Activated naive CD4-positive, alpha-beta T cell treated with anti-CD3 and anti-CD28 coated beads, Interleukin-2, amount 10 ng/mL, durations not matched to agents 7 days and 5 days (primary cell): ENCODE measurements at regions of chr19 and their contacts with region 1.

Region 1: GRCh38 chr19:41641879-41642485 is 15.1 kb upstream of the CEACAM4 start:
- DNase-seq: peak; percentile 79
- H3K4me3 Mint-ChIP-seq: no peak overlapping the region
- H3K27ac Mint-ChIP-seq: no peak overlapping the region
- H3K4me1 Mint-ChIP-seq: peaks cover 4% of the 10 kb centered on the region
- H3K27me3 Mint-ChIP-seq: peaks cover 22% of the 10 kb centered on the region

Region 2: DNA sequence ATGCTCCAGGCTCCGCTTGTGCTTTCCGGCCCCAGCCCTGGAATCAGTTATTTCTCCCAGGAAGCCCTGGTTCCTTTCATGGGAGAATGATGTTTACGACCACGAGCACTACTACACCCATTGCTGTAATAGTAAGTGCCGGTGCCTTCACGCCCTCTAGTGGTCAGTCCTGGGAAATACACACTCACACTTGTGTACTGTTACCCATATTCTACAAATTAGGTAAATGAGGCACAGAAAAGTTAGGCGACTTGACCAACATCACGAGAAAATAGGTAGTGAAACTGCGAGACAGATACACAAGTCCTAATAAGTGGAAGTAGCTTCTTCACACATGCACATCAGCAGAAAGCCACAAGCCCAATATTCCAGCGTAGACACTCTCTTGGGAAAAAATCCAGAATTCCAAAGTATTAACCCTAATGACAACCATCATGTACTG is 44.4 kb before region 1 on chr19:
- CTCF ChIA-PET with region 1: no interaction called
- DNase-seq: peak; percentile 86
- H3K4me3 Mint-ChIP-seq: no peak overlapping the region
- H3K27ac Mint-ChIP-seq: no peak overlapping the region
- H3K4me1 Mint-ChIP-seq: peaks cover 12% of the 10 kb centered on the region
- H3K27me3 Mint-ChIP-seq: peaks cover 47% of the 10 kb centered on the region

Region 3: GRCh38 chr19:41652250-41652649 is 10.3 kb after region 1 on chr19:
- CTCF ChIA-PET with region 1: interaction called, 21 read pairs
- DNase-seq: no peak
- H3K4me3 Mint-ChIP-seq: no peak overlapping the region
- H3K27ac Mint-ChIP-seq: no peak overlapping the region
- H3K4me1 Mint-ChIP-seq: peaks cover 3% of the 10 kb centered on the region
- H3K27me3 Mint-ChIP-seq: peaks cover 50% of the 10 kb centered on the region

Region 4: DNA sequence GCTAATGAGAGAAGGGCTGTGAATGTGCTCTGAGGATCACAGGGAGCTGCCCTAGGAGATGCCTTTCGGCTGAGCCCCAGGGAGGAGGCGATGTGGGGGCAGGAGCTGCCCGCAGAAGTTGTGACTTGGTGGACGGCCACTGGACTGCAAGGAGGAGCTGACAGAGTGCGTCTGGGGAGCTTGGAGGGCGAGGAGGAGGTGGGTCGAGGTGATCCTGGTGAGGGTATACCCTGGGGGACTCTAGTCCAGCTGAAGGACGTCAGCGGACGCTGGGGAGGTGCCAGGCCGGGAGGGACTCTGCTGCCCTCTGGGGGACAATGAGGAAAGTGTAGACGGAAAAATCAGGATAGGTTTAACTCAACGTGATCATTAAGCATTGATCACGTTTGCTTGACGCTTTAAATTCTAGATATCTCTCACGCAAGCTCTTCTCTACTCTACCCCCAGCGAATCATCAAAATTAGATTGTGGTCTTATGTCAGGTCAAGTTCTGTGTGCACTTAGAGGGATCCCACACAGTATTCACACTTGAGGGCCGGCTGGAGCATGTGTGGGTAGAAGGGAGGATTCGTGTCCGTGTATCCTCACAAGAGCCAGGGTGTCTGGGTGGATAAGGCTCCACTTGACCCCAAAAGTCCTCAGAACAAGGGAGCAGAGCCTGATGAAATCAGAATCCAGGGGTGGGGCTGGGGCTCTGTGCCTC is 49.4 kb after region 1 on chr19:
- CTCF ChIA-PET with region 1: interaction called, 29 read pairs
- DNase-seq: peak; percentile 50
- H3K4me3 Mint-ChIP-seq: no peak overlapping the region
- H3K27ac Mint-ChIP-seq: no peak overlapping the region
- H3K4me1 Mint-ChIP-seq: no peaks in the 10 kb centered on the region
- H3K27me3 Mint-ChIP-seq: peaks cover 42% of the 10 kb centered on the region